ENCODE measurements at regions of chr1 and their contacts with region 1.

Region 1: DNA sequence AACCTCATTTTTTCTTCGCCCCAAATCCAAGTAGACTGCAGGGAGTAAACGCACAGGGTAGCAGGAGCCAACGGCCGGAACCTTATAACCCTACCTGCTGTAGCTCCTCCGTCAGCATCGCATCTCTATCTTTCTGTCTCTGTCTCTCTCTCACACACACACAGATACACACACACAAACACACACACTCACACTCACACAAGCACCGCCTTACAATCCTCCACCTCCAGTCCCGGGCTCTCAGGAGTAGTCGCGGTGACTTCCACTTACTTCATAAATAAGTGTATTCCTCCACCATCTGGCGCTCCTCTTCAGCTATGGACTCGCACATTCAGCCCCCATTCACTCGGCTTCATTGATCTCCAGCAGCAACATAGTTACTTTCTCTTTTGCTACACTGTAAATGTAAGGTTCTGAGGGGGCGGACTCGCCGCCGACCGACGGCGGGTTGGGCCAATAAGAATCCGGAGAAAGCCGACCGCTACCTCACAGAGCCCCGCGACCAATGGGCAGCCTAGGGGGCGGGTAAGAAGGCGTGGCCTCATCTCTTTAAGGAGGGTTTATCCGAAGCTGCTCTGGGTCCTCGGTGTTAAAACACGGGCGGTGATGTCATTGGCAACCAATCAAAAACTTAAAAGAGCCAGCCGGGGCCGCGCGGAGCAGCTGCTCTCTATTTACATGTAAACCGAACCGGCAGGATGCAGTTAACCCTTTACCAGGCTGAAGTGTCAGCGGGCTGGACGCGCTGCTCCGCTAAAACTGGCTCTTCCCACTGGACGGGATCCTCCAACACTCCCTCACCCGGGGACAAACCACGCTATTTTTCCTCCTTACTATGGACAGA is at the start of gene DUSP10:
- DNase-seq: peak; percentile 93
- ATAC-seq: peak; percentile 81
- H3K4me3 Mint-ChIP-seq: no peak within 1 kb of the TSS
- H3K27ac Mint-ChIP-seq: peak within 1 kb of the TSS; percentile 88
- H3K4me1 Mint-ChIP-seq: peaks cover 33% of the 10 kb centered on the region
- H3K27me3 Mint-ChIP-seq: no peaks in the 10 kb centered on the region
- total RNA-seq, gene DUSP10: 14.8 to 15.7 TPM

Region 2: DNA sequence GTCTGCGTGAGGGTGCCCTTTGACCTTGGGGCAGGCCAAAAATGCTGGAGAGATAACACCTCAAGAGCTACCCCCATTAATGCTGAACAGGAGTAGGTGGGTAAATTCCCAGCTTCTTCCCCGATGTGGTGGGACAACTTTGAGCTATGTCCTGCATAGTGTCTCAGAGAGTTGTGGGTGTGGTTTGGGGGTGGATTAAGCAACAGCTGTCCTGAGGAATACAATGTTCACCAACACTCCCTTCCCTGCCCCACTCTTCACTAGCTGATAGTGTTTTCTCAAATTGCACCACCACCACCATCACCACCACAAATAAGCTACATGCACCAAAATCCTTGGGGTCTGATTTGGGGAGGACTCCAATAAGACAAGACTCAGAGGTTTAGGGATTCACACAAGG is 604.3 kb before region 1 on chr1:
- POLR2A ChIA-PET with region 1: no interaction called
- DNase-seq: no peak
- ATAC-seq: no peak
- H3K4me3 Mint-ChIP-seq: no peak overlapping the region
- H3K27ac Mint-ChIP-seq: no peak overlapping the region
- H3K4me1 Mint-ChIP-seq: no peaks in the 10 kb centered on the region
- H3K27me3 Mint-ChIP-seq: no peaks in the 10 kb centered on the region

Region 3: DNA sequence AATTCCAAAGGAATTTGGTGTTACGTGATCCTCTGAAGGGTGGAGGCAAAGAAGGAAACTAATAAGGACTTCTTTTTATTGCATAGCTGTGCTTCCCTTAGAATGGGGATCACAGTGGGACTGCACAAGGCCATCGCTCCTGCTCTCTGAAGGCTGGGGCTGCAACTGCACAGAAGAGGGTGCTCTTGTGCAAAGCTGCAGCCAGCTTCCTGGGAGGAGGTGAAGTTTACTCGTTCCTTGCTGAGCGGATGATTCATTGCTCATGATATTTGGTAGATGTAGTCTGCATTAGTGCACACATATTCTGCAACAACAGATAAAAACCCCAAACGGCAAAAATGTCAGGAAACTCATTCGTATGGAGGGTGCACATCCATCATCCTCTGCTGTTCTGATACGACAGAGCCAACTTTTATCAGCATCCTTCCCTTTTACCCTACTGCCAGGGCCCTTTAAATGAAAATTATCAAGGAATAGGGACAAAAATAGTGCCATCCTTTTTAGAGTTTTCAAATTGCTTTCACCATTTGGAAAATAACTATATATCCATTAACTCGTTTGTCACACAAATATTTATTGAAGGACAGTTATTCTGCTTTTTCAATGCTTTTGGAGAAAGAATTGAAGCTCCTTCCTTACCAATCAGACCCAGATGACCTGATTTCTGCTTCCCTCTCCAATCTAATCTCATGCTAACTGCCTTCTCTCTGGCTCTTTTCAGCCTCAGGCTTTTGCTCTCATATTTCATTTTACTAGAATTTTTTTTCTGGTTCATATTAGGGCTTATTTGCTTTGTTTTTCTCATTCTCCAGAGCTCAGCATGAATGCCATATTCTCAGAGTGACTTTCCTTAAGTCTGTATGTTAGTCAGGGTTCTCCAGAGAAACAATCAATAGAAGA is 263.6 kb before region 1 on chr1:
- POLR2A ChIA-PET with region 1: interaction called, 11 read pairs
- DNase-seq: peak; percentile 45
- ATAC-seq: peak; percentile 88
- H3K4me3 Mint-ChIP-seq: no peak overlapping the region
- H3K27ac Mint-ChIP-seq: no peak overlapping the region
- H3K4me1 Mint-ChIP-seq: no peaks in the 10 kb centered on the region
- H3K27me3 Mint-ChIP-seq: peaks cover 12% of the 10 kb centered on the region

Region 4: DNA sequence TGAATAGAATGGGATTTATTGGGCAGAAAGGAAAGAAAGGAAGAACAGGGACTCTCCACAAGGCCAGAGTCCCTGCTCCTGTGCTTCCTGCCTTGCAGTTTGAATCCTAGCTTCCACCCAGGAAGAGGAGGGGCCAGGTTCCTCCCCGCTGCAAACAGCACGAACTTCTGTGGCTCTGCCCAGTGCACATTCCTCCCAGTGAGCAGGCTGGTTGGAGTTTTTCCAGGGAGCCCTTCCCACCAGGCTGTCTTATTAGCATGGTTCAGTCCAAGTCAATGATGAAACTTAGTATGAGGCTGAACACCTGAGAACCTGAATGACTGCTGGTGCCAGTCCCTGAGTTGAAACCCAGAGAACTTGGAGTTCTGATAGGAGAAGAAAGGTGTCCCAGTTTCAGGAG is 247.3 kb before region 1 on chr1:
- POLR2A ChIA-PET with region 1: no interaction called
- DNase-seq: no peak
- ATAC-seq: no peak
- H3K4me3 Mint-ChIP-seq: no peak overlapping the region
- H3K27ac Mint-ChIP-seq: no peak overlapping the region
- H3K4me1 Mint-ChIP-seq: no peaks in the 10 kb centered on the region
- H3K27me3 Mint-ChIP-seq: peaks cover 7% of the 10 kb centered on the region

Region 5: GRCh38 chr1:221708987-221709386 is 32.9 kb before region 1 on chr1:
- POLR2A ChIA-PET with region 1: interaction called, 159 read pairs
- DNase-seq: no peak
- ATAC-seq: peak; percentile 4
- H3K4me3 Mint-ChIP-seq: no peak overlapping the region
- H3K27ac Mint-ChIP-seq: peak overlapping the region; percentile 61
- H3K4me1 Mint-ChIP-seq: peaks cover 60% of the 10 kb centered on the region
- H3K27me3 Mint-ChIP-seq: no peaks in the 10 kb centered on the region

Region 6: DNA sequence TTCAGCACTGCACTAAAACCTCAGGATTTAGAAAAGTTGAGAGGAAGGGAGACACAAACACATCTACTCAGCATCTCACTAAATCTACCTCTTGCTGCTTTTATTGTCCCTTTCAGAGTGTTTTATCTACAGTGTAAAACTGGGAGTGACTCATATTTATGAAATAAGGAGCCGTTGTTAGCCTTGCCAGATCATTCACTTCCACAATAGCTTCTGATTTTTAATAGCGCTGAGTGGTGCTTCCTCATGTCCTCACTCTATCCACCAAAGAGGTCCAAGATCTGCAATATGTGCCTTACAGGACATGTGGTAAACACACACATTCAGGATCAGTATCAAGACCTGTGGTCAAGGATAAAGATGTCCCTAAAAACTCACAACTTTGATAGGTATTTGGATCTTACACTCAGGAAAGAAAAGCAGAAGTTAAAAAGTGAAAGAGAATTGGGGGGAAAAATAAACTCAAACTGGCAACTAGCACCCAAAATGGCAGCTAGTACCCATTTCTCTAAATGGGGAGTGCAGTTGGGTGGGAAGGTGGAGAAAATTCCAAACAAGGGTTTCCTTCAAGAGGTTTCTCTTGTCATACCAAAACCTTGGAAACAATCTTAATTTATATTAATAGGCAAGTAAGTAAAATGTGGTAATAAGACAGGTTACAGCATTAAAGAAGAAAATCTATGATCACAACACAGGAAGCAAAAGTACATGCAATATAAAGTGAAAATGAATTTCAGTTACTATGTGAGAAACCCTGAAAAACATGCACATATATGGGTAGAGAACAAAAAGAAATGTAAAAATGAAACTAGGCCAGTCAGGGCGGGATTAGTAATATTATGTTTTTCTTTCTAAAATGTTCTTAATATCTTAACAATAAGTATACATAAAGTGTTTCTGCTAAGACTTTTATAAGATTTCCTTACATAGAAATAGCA is 15.9 kb before region 1 on chr1:
- POLR2A ChIA-PET with region 1: interaction called, 22 read pairs
- DNase-seq: no peak
- ATAC-seq: peak; percentile 75
- H3K4me3 Mint-ChIP-seq: peak overlapping the region; percentile 79
- H3K27ac Mint-ChIP-seq: peak overlapping the region; percentile 91
- H3K4me1 Mint-ChIP-seq: peaks cover 66% of the 10 kb centered on the region
- H3K27me3 Mint-ChIP-seq: no peaks in the 10 kb centered on the region

Region 7: GRCh38 chr1:221829327-221830015 is 87.5 kb after region 1 on chr1:
- POLR2A ChIA-PET with region 1: interaction called, 46 read pairs
- DNase-seq: no peak
- ATAC-seq: peak; percentile 81
- H3K4me3 Mint-ChIP-seq: peak overlapping the region; percentile 82
- H3K27ac Mint-ChIP-seq: peak overlapping the region; percentile 97
- H3K4me1 Mint-ChIP-seq: peaks cover 72% of the 10 kb centered on the region
- H3K27me3 Mint-ChIP-seq: no peaks in the 10 kb centered on the region